Calu3 (cell line): ENCODE measurements at regions of chr4 and their contacts with region 1.

Region 1: DNA sequence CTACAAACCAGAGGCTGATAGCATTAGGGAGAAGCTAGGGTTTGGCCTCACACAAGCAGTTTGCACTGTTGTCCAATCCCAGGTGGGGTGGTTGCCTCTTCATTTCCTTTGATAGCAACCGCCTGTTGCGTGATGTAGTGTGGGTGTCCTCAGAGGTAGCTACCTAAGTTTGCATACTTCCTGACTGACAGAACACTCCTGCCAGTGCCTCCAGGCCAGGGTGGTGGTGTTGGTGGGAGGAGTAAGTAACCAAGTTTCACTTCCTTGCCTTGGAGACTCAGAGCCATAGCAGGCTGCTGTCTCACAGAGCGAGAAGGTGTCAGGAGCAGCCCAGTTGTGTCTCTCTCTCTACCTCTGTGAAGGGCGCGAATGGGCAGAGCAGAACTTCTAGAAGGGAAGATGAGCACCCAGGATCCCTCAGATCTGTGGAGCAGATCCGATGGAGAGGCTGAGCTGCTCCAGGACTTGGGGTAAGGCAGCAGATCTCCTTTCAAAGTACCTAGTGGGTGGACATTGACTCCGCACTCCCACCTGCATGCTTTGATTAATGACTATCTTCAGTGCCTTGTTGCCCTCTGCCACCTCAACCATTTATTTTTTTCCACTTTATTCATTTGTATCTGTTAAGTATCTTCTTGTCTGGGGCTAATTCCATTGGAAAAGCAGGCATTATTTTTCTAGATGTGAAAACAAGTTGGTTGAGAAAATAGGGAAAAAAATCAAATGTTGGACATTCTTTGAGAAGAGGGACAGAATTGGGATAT is at the start of gene DAPP1:
- DNase-seq: peak; percentile 73
- H3K4me3 Mint-ChIP-seq: peak within 1 kb of the TSS; percentile 73
- H3K27ac Mint-ChIP-seq: peak within 1 kb of the TSS; percentile 65
- H3K4me1 Mint-ChIP-seq: peaks cover 18% of the 10 kb centered on the region
- H3K27me3 Mint-ChIP-seq: no peaks in the 10 kb centered on the region
- CTCF ChIP-seq: no peak
- total RNA-seq, gene DAPP1: 25.9 and 30.6 TPM in 2 replicates

Region 2: GRCh38 chr4:99783940-99784339 is 32.8 kb before region 1 on chr4:
- CTCF ChIA-PET with region 1: no interaction called
- intact Hi-C with region 1: no loop called
- DNase-seq: no peak
- H3K4me3 Mint-ChIP-seq: no peak overlapping the region
- H3K27ac Mint-ChIP-seq: no peak overlapping the region
- H3K4me1 Mint-ChIP-seq: no peaks in the 10 kb centered on the region
- H3K27me3 Mint-ChIP-seq: no peaks in the 10 kb centered on the region
- CTCF ChIP-seq: no peak

Region 3: DNA sequence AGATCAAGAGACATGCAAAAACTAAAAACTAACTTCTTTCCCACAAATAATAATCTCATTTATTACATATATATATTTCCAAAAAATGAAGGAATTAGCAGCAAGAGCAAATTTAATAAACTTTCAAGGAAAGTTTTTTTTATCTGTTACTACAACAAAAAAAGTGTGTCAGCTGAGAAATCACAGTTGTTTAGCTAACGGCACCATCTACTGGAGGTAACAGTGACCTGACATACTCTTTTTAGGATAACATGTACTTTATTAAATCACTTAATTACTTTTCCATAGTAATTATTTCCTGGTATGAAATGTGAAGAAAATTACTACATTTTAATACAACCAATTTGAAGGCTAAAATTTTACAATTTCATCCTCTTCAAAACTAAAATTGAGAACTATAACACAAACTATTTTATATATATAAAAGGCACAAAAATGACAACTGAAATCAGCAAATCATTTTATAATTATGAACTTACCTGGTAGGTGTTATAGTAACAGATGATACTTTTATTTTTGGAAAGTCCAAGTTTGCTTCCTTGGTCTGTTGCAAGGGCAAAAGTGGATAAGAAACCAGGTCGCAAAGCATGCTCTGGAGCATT is 68.4 kb after region 1 on chr4:
- CTCF ChIA-PET with region 1: interaction called, 3 read pairs
- intact Hi-C with region 1: loop called (anchors 2 kb)
- DNase-seq: peak; percentile 11
- H3K4me3 Mint-ChIP-seq: no peak overlapping the region
- H3K27ac Mint-ChIP-seq: no peak overlapping the region
- H3K4me1 Mint-ChIP-seq: no peaks in the 10 kb centered on the region
- H3K27me3 Mint-ChIP-seq: no peaks in the 10 kb centered on the region
- CTCF ChIP-seq: no peak

Region 4: GRCh38 chr4:99949034-99949998 is 132.6 kb after region 1 on chr4:
- CTCF ChIA-PET with region 1: no interaction called
- intact Hi-C with region 1: loop called (anchors 5 kb)
- DNase-seq: peak; percentile 89
- H3K4me3 Mint-ChIP-seq: no peak overlapping the region
- H3K27ac Mint-ChIP-seq: no peak overlapping the region
- H3K4me1 Mint-ChIP-seq: no peaks in the 10 kb centered on the region
- H3K27me3 Mint-ChIP-seq: no peaks in the 10 kb centered on the region
- CTCF ChIP-seq: peak; percentile 67

Region 5: DNA sequence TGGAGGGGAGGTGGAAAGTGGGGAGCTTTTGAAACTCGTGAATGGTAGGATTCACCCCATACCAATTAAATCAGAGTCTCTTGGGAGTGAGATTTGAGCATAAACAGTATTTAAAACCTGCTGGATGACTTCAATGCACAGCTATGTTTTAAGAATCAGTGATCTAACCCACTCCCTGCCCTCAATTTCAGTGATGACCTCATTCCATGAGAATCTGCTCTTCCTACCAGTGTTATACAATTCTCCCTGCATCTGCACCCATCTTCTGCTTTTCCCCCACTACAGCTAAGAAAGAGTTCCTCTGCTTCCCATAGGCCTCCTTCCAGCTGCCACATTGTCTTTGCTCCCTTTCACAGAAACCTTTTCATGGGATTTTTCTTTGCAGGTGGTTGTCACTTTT is 151.6 kb after region 1 on chr4:
- CTCF ChIA-PET with region 1: no interaction called
- intact Hi-C with region 1: no loop called
- DNase-seq: no peak
- H3K4me3 Mint-ChIP-seq: no peak overlapping the region
- H3K27ac Mint-ChIP-seq: no peak overlapping the region
- H3K4me1 Mint-ChIP-seq: peaks cover 6% of the 10 kb centered on the region
- H3K27me3 Mint-ChIP-seq: no peaks in the 10 kb centered on the region
- CTCF ChIP-seq: no peak

Region 6: DNA sequence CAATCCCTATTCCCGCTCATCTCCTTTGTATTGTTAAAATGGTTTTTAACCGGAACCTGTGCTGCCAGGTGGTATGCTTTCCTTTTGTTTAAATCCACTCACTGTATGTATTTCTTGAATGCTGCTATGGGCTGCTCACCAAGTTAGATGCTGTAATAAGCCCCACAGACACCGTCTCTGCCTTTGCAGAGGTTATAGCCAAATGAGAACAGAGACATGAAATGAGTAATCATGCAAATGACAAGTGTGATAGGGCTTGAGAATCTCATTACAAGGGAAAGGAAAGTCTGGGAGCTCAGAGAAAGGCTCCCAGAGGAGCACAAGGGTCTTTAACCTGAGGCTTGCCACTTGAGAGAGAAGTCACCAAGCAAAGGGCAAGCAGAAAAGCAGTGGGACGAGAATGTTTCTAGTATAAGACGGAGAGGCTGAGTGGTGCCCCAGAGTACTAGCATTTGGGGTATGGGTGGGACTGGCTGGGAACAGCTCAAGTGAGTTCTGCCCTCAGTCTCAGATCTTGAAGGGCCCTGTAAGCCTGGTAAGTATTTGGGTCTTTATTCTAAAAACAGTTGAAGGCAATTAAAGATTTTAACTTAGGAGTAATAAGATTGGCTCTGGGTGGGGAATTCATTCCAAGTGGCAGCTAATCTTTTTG is 244.2 kb after region 1 on chr4:
- CTCF ChIA-PET with region 1: no interaction called
- intact Hi-C with region 1: loop called (anchors 10 kb)
- DNase-seq: no peak
- H3K4me3 Mint-ChIP-seq: no peak overlapping the region
- H3K27ac Mint-ChIP-seq: no peak overlapping the region
- H3K4me1 Mint-ChIP-seq: peaks cover 13% of the 10 kb centered on the region
- H3K27me3 Mint-ChIP-seq: no peaks in the 10 kb centered on the region
- CTCF ChIP-seq: no peak